Left colon (tissue), 2 donors: ENCODE measurements at regions of chrX and their contacts with region 1.

Region 1: GRCh38 chrX:50081282-50081889 is 119.4 kb downstream of the AKAP4 start:
- DNase-seq: peak; percentile 33 to 39
- ATAC-seq: peak; percentile 88

Region 2: DNA sequence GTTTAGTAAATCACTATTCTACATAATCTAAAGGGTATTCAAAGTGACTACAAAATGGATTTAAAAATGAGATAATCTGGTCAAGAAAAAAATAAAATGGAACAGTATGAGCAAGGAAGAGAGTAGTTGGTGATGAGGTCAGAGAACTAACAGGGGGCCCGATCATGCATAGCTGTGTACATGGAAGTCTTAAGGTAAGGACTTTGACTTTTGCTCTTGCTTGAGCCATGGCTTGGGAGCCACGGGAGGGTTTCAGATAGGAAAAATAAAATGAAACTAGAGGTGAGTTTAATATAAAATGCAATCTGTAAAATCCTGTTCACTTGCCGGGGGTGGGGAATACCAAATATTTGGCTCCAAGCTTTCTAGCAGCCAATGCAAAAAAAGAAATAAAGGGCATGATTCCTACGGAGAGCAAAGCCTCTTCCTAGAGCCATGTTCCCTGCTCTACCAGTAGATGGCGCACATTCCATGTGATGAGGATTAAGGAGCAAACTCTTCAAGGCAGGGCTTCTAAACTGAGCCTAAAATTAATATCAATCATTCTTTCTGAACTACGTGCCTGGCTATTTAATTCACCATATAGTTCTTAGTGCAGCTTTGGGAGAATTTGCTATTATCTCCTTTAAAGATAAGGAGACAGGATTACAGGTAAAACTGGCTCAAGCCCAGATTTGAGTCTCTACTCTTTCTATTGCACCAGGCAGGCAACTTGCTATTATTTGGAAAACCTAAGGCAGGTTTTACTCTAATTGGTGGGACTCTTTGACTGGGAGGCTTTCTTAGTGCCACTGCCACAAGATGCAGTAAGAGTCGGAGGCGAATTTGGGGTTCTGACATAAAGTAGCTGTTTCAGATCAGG is 165.8 kb before region 1 on chrX:
- intact Hi-C with region 1: loop called in 1 of 2 experiments (anchors 10 kb)
- DNase-seq: peak in 1 of 2 donors; percentile 44
- ATAC-seq: peak; percentile 78